ENCODE measurements at regions of chr10 and their contacts with region 1.

Region 1: DNA sequence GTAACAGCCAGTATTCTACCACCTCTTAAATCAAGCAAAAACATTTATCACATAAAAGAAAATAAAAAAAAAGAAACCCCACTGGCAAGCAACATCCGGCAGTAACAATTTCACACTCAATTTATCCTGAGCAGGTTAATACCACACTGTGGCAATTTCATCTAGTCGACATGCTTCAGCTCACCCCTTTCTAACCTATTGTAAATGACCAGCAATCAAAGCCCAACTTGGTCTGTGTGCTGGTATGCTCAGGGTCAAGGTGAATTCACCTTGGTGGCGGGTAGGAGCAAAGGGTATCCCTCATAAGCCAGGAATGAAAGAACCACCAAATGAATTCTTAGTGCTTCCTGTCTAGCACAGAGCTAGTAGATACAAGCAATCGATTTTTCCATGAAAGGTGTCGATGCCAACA is 109.1 kb upstream of the AFAP1L2 start:
- DNase-seq: no peak
- H3K4me3 ChIP-seq: no peak overlapping the region
- H3K27ac ChIP-seq: no peak overlapping the region
- H3K4me1 ChIP-seq: peaks cover 31 to 51% (median 48%) of the 10 kb centered on the region in 4 donors
- H3K27me3 ChIP-seq: no peaks in the 10 kb centered on the region
- CTCF ChIP-seq: no peak
- EP300 ChIP-seq: no peak
- POLR2A ChIP-seq: no peak

Region 2: DNA sequence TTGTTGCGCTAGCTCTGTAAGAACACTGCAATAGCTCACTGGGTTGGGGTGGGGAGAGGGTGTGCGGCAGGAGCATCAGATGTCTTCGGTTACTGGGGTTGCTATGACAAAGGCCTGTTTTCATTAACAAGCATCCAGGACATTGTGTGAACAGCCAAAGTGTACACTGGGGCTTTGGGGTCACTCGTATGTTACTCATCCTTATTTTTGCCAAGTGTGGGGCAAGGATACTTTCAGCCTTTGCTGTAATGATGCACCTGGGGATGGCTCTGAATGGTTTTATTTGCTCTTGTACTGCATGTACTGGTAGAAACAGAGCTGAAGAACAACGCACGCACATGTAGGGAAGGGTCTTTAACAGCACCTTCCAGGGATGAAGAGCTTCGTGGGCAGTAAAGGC is 36.1 kb before region 1 on chr10:
- intact Hi-C with region 1: loop called (anchors 5 kb)
- DNase-seq: no peak
- H3K4me3 ChIP-seq: no peak overlapping the region
- H3K27ac ChIP-seq: peak overlapping the region; percentile 67 to 76 (median 74)
- H3K4me1 ChIP-seq: peaks cover 43 to 63% (median 49%) of the 10 kb centered on the region in 4 donors
- H3K27me3 ChIP-seq: no peaks in the 10 kb centered on the region
- CTCF ChIP-seq: no peak
- EP300 ChIP-seq: peak; percentile 55
- POLR2A ChIP-seq: no peak